HEK293 (cell line): ENCODE measurements at regions of chr11 and their contacts with region 1.

Region 1: DNA sequence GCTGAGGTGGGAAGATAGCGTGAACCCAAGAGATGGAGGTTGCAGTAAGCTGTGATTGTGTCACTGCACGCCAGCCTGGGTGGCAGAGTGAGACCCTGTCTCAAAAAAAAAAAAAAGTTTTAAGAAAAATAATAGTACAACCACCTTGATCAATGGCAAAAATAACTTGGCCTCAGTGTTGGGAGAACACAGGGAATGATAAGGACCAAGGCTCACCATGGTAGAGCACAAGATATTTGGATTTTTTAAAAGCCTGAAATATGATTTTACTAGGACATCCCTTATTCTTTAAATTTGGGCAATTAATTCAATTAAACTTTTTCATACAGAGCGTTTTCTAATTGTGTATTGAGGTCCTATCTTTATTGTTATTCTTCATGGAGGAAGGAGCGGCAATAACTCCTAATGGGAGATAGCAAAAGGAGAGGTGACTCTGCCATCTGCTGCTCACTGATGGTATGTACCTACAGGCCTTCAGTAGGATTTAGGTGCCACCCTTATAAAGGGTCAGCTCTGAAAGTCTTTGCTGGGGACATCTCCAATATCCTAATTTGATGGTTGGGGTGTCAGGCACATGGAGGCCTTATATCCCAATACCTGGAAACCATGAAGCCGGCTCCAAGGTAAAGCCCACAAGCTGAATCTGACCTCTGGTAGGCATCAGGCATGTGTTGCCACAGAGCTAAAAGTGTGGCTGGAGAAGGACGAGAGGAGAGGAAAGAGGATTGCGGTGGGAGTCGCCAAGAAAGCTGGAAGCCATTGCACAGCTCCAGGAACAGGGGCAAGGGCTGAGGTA is 21.9 kb upstream of the POLD3 start:
- H3K4me3 ChIP-seq: no peak overlapping the region
- H3K27ac ChIP-seq: no peak overlapping the region
- H3K4me1 ChIP-seq: no peaks in the 10 kb centered on the region
- CTCF ChIP-seq: no peak; the same call in 1 of the 2 replicates

Region 2: DNA sequence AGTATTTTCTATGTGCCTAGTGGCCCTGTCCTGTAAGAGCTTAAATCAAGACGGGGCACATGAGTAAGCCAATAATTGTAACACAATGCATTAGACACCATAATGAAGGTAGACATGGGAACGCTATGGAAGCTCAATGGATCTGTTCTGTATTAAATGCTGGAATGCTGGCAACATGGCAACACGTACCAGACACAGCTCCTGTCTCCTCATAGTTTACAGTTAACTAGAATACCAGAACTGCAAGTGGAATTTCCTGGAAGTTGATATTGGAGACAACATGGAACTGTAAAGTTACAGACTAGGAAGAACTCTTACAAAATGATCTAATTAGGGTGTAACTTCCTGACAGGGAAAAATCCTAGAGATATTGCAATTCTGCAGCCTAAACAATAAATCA is 271.4 kb before region 1 on chr11:
- CTCF ChIA-PET with region 1: no interaction called
- POLR2A ChIA-PET with region 1: no interaction called
- H3K4me3 ChIP-seq: no peak overlapping the region
- H3K27ac ChIP-seq: no peak overlapping the region
- H3K4me1 ChIP-seq: no peaks in the 10 kb centered on the region
- CTCF ChIP-seq: no peak

Region 3: DNA sequence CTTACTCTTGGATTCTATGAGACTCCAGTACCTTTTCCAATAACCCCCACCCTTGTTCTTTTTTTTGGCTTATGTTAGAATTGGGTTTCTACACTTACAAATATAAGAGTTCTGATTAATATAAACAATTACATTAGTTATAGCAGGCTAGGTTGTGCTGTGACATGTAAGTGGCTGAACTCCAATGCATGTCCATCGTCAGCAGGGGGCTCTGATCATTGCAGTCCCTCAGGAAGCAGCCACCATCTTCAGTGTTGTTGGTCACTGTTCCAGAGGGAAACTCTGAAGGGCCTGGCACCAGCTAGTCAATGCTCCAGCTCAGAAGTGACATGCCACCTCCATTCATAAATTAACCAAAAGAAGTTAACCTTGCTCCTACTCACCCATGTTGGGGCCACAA is 82.6 kb before region 1 on chr11:
- CTCF ChIA-PET with region 1: interaction called, 11 read pairs
- POLR2A ChIA-PET with region 1: interaction called, 7 read pairs
- H3K4me3 ChIP-seq: no peak overlapping the region
- H3K27ac ChIP-seq: no peak overlapping the region
- H3K4me1 ChIP-seq: no peaks in the 10 kb centered on the region
- CTCF ChIP-seq: no peak